Activated naive CD4-positive, alpha-beta T cell treated with anti-CD3 and anti-CD28 coated beads, Interleukin-2, amount 10 ng/mL, durations not matched to agents 7 days and 5 days (primary cell): ENCODE measurements at regions of chr3 and their contacts with region 1.

Region 1: GRCh38 chr3:42539869-42540714 is 37.6 kb downstream of the VIPR1 start:
- DNase-seq: peak; percentile 80
- H3K4me3 Mint-ChIP-seq: no peak overlapping the region
- H3K27ac Mint-ChIP-seq: no peak overlapping the region
- H3K4me1 Mint-ChIP-seq: peaks cover 21% of the 10 kb centered on the region
- H3K27me3 Mint-ChIP-seq: peaks cover 15% of the 10 kb centered on the region

Region 2: GRCh38 chr3:42518800-42519567 is 21.1 kb before region 1 on chr3:
- CTCF ChIA-PET with region 1: interaction called, 98 read pairs
- DNase-seq: peak; percentile 65
- H3K4me3 Mint-ChIP-seq: no peak overlapping the region
- H3K27ac Mint-ChIP-seq: no peak overlapping the region
- H3K4me1 Mint-ChIP-seq: peaks cover 43% of the 10 kb centered on the region
- H3K27me3 Mint-ChIP-seq: no peaks in the 10 kb centered on the region

Region 3: GRCh38 chr3:42552830-42553229 is 12.7 kb after region 1 on chr3:
- CTCF ChIA-PET with region 1: interaction called, 80 read pairs
- DNase-seq: no peak
- H3K4me3 Mint-ChIP-seq: no peak overlapping the region
- H3K27ac Mint-ChIP-seq: no peak overlapping the region
- H3K4me1 Mint-ChIP-seq: peaks cover 35% of the 10 kb centered on the region
- H3K27me3 Mint-ChIP-seq: no peaks in the 10 kb centered on the region

Region 4: DNA sequence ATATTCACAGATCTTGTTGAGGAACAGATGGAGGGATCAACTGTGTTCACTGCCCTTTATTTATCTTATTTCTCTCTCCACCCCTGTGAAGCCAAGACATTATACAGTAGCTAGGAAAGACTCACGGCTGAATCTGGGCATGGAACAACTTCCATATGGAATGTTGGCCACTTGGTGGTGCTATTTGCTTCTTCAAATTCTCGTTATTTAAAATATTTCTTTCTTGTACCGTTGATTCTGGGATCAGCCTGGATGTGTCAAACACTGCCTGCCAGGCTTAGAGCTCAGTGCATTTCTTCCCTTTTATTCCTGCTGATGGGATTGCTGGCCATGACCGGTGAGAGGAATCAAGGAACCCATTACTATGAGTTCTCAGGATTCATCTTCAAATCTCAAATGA is 421.5 kb after region 1 on chr3:
- CTCF ChIA-PET with region 1: no interaction called
- DNase-seq: peak; percentile 33
- H3K4me3 Mint-ChIP-seq: no peak overlapping the region
- H3K27ac Mint-ChIP-seq: no peak overlapping the region
- H3K4me1 Mint-ChIP-seq: peaks cover 7% of the 10 kb centered on the region
- H3K27me3 Mint-ChIP-seq: peaks cover 4% of the 10 kb centered on the region